Calu3 (cell line): ENCODE measurements at regions of chr21 and their contacts with region 1.

Region 1: GRCh38 chr21:45405818-45406762 is 1.1 kb downstream of the COL18A1 start:
- DNase-seq: peak; percentile 31
- H3K4me3 Mint-ChIP-seq: peak overlapping the region; percentile 61
- H3K27ac Mint-ChIP-seq: peak overlapping the region; percentile 27
- H3K4me1 Mint-ChIP-seq: peaks cover 39% of the 10 kb centered on the region
- H3K27me3 Mint-ChIP-seq: no peaks in the 10 kb centered on the region
- CTCF ChIP-seq: no peak

Region 2: DNA sequence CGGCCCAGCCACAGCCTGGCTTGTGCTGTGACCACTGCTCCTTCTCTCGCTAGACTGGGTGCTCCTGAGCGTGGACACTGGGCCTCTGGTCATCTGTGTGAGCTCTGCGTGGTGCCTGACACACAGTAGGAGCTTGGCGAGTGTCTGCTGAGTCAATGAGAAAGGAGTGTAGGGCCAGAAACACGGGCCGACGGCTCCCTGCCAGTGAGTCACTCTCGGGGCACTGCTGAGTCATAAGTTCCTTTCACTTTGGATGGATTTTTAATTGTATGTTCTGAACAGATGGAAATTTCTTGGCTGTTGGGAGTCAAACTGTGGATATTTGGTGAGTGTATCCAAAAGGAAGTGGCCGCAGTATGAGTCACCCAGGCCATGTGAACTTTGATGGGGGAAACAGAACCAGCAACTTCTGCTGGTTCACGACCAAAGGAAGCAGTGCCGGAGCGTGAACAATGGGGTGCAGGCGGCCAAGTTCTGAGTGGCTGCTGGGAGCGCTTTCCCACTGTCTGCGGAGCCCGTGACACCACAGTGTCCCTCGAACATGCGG is 42.1 kb before region 1 on chr21:
- CTCF ChIA-PET with region 1: no interaction called
- intact Hi-C with region 1: loop called (anchors 1 kb)
- DNase-seq: peak; percentile 66
- H3K4me3 Mint-ChIP-seq: peak overlapping the region; percentile 59
- H3K27ac Mint-ChIP-seq: peak overlapping the region; percentile 96
- H3K4me1 Mint-ChIP-seq: peaks cover 30% of the 10 kb centered on the region
- H3K27me3 Mint-ChIP-seq: no peaks in the 10 kb centered on the region
- CTCF ChIP-seq: no peak